Natural killer cell (primary cell): ENCODE measurements at regions of chr17 and their contacts with region 1.

Region 1: GRCh38 chr17:21284319-21285163 is at the start of gene MAP2K3:
- DNase-seq: peak; percentile 96 to 98
- ATAC-seq: peak; percentile 64 to 86 (median 74)
- H3K4me3 ChIP-seq: peak within 1 kb of the TSS; percentile 88
- H3K4me3 Mint-ChIP-seq: peak within 1 kb of the TSS; percentile 96
- H3K27ac ChIP-seq: peak within 1 kb of the TSS; percentile 97
- H3K27ac Mint-ChIP-seq: peak within 1 kb of the TSS; percentile 96 to 99
- H3K4me1 ChIP-seq: peaks cover 69% of the 10 kb centered on the region
- H3K4me1 Mint-ChIP-seq: peaks cover 49 to 74% of the 10 kb centered on the region in 2 donors
- H3K27me3 ChIP-seq: no peaks in the 10 kb centered on the region
- H3K27me3 Mint-ChIP-seq: no peaks in the 10 kb centered on the region
- CTCF ChIP-seq: no peak
- total RNA-seq, gene MAP2K3: 139 to 165 (median 162) TPM

Region 2: DNA sequence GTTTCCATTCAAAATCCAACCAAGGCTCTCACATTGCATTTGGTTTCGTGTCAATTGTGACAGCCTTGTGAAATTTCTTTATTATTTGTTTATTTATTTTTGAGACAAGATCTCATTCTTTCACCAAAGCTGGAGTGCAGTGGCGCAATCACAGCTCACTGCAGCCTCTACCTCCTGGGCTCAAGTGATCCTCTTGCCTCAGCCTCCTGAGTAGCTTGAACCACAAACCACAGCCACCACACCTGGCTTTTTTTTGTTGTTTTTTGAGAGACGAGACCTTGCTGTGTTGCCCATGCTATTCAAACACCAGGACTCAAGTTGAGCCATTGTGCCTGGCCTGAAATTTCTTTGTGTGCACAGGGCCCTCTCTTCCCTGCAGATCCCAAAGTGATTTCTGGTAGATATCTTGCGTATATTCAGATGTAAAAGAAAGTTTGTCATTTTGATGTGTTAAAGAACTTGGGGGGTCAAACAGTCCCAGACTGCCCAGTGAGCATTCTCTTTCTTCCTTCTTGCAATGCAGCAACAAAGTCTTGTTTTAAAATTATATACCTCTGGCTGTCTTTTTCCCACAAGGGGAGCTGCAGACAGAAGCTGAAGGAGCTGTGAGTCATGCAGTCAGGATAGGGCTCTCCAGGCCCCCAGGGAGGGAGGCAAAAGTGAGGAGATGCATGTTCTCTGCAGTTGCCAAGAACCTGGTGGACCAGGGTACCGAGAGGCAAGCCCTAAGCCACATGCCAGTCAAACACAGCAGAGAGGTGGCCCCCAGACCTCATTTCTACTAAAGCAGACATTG is 226.2 kb before region 1 on chr17:
- intact Hi-C with region 1: no loop called
- DNase-seq: no peak
- ATAC-seq: no peak
- H3K4me3 ChIP-seq: no peak overlapping the region
- H3K4me3 Mint-ChIP-seq: no peak overlapping the region
- H3K27ac ChIP-seq: no peak overlapping the region
- H3K27ac Mint-ChIP-seq: no peak overlapping the region
- H3K4me1 ChIP-seq: peaks cover 4% of the 10 kb centered on the region
- H3K4me1 Mint-ChIP-seq: no peaks in the 10 kb centered on the region
- H3K27me3 ChIP-seq: no peaks in the 10 kb centered on the region
- H3K27me3 Mint-ChIP-seq: peaks cover 0 to 3% of the 10 kb centered on the region in 2 donors
- CTCF ChIP-seq: no peak

Region 3: GRCh38 chr17:21089145-21089544 is 195.4 kb before region 1 on chr17:
- intact Hi-C with region 1: no loop called
- DNase-seq: no peak
- ATAC-seq: no peak
- H3K4me3 ChIP-seq: no peak overlapping the region
- H3K4me3 Mint-ChIP-seq: no peak overlapping the region
- H3K27ac ChIP-seq: no peak overlapping the region
- H3K27ac Mint-ChIP-seq: no peak overlapping the region
- H3K4me1 ChIP-seq: no peaks in the 10 kb centered on the region
- H3K4me1 Mint-ChIP-seq: no peaks in the 10 kb centered on the region
- H3K27me3 ChIP-seq: no peaks in the 10 kb centered on the region
- H3K27me3 Mint-ChIP-seq: peaks cover 0 to 3% of the 10 kb centered on the region in 2 donors
- CTCF ChIP-seq: no peak

Region 4: GRCh38 chr17:21126645-21127510 is 157.7 kb before region 1 on chr17 and contains the start of gene DHRS7B:
- intact Hi-C with region 1: loop called (anchors 2 kb)
- DNase-seq: peak; percentile 95 to 99
- ATAC-seq: peak; percentile 84 to 91 (median 88)
- H3K4me3 ChIP-seq: peak within 1 kb of the TSS; percentile 72
- H3K4me3 Mint-ChIP-seq: peak within 1 kb of the TSS; percentile 98
- H3K27ac ChIP-seq: peak within 1 kb of the TSS; percentile 91
- H3K27ac Mint-ChIP-seq: peak within 1 kb of the TSS; percentile 97 to 98
- H3K4me1 ChIP-seq: peaks cover 16% of the 10 kb centered on the region
- H3K4me1 Mint-ChIP-seq: peaks cover 34 to 39% of the 10 kb centered on the region in 2 donors
- H3K27me3 ChIP-seq: no peaks in the 10 kb centered on the region
- H3K27me3 Mint-ChIP-seq: no peaks in the 10 kb centered on the region
- CTCF ChIP-seq: no peak
- total RNA-seq, gene DHRS7B: 10.3 to 13.4 (median 11.5) TPM

Region 5: GRCh38 chr17:21228104-21228503 is 56.4 kb before region 1 on chr17:
- intact Hi-C with region 1: no loop called
- DNase-seq: no peak
- ATAC-seq: no peak
- H3K4me3 ChIP-seq: no peak overlapping the region
- H3K4me3 Mint-ChIP-seq: no peak overlapping the region
- H3K27ac ChIP-seq: no peak overlapping the region
- H3K27ac Mint-ChIP-seq: no peak overlapping the region
- H3K4me1 ChIP-seq: no peaks in the 10 kb centered on the region
- H3K4me1 Mint-ChIP-seq: no peaks in the 10 kb centered on the region
- H3K27me3 ChIP-seq: no peaks in the 10 kb centered on the region
- H3K27me3 Mint-ChIP-seq: no peaks in the 10 kb centered on the region
- CTCF ChIP-seq: no peak

Region 6: GRCh38 chr17:21252796-21253645 is 31.5 kb before region 1 on chr17 and contains the start of gene NATD1:
- intact Hi-C with region 1: loop called (anchors 1 kb)
- DNase-seq: peak; percentile 80 to 91
- ATAC-seq: peak; percentile 83 to 92 (median 88)
- H3K4me3 ChIP-seq: peak within 1 kb of the TSS; percentile 64
- H3K4me3 Mint-ChIP-seq: peak within 1 kb of the TSS; percentile 85
- H3K27ac ChIP-seq: peak within 1 kb of the TSS; percentile 66
- H3K27ac Mint-ChIP-seq: peak within 1 kb of the TSS; percentile 89 to 93
- H3K4me1 ChIP-seq: peaks cover 25% of the 10 kb centered on the region
- H3K4me1 Mint-ChIP-seq: peaks cover 33 to 49% of the 10 kb centered on the region in 2 donors
- H3K27me3 ChIP-seq: no peaks in the 10 kb centered on the region
- H3K27me3 Mint-ChIP-seq: no peaks in the 10 kb centered on the region
- CTCF ChIP-seq: no peak
- total RNA-seq, gene NATD1: 10.9 to 16.3 (median 14.1) TPM

Region 7: GRCh38 chr17:21296091-21297025 is 11.8 kb after region 1 on chr17:
- intact Hi-C with region 1: loop called (anchors 1 kb)
- DNase-seq: peak in 1 of 2 donors; percentile 60
- ATAC-seq: peak; percentile 71 to 89 (median 82)
- H3K4me3 ChIP-seq: no peak overlapping the region
- H3K4me3 Mint-ChIP-seq: peak overlapping the region; percentile 78
- H3K27ac ChIP-seq: peak overlapping the region; percentile 24
- H3K27ac Mint-ChIP-seq: peak overlapping the region; percentile 83 to 88
- H3K4me1 ChIP-seq: peaks cover 60% of the 10 kb centered on the region
- H3K4me1 Mint-ChIP-seq: peaks cover 33 to 44% of the 10 kb centered on the region in 2 donors
- H3K27me3 ChIP-seq: no peaks in the 10 kb centered on the region
- H3K27me3 Mint-ChIP-seq: no peaks in the 10 kb centered on the region
- CTCF ChIP-seq: no peak

Region 8: DNA sequence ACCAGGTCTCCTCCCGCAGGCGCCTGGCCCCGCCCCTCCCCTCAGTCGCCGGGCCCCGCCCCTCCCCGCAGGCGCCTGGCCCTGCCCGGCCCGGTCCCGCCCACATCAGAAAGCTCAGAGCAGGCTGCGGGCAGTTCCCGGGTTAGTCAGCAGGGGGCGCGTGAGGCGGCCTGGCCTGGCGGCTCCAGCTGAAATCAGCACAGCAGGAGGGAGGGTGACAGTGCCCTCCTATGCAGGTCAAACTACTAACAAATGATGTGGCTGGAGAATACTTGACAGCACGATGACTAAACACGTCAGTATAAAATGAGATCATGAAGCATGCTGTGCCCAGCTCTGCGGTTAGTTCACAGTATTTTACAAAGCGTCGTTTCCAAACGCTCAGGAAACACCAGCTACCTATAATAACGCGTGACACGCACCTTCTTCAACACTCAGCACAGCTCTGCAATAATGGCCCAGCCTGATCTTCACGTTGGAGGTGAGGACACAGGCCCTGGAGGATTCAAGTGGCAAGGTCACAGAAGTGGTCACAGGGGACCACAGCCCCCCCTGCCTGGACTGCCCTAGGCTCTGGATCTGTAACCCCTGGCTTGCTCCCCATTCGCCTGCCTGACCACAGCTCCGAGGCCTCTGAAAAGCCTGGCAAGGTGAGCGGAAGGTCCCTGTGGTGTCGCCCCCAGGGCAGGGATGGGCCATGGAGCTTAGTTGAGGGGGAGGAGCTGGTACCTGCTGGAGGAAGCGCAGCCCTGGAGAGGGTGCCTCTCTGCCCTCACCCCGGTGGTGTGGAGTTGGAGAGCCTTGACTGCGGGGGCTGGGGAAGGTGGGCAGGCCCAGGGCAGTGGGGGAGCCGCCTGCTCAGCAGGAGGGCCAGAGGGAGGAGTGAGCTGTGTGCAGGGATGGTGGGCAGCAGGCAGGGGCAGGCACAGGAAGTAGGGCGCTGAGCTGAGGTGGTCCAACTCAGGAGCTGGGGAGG is 172.8 kb after region 1 on chr17:
- intact Hi-C with region 1: loop called (anchors 5 kb)
- DNase-seq: peak; percentile 93 to 94
- ATAC-seq: peak; percentile 91 to 96 (median 93)
- H3K4me3 ChIP-seq: no peak overlapping the region
- H3K4me3 Mint-ChIP-seq: no peak overlapping the region
- H3K27ac ChIP-seq: no peak overlapping the region
- H3K27ac Mint-ChIP-seq: peak overlapping the region in 1 of 2 donors; percentile 84
- H3K4me1 ChIP-seq: peaks cover 17% of the 10 kb centered on the region
- H3K4me1 Mint-ChIP-seq: peaks cover 7 to 28% of the 10 kb centered on the region in 2 donors
- H3K27me3 ChIP-seq: no peaks in the 10 kb centered on the region
- H3K27me3 Mint-ChIP-seq: peaks cover 0 to 15% of the 10 kb centered on the region in 2 donors
- CTCF ChIP-seq: peak; percentile 96

Region 9: GRCh38 chr17:21505819-21506815 is 221.6 kb after region 1 on chr17:
- intact Hi-C with region 1: no loop called
- DNase-seq: no peak
- ATAC-seq: no peak
- H3K4me3 ChIP-seq: no peak overlapping the region
- H3K4me3 Mint-ChIP-seq: no peak overlapping the region
- H3K27ac ChIP-seq: no peak overlapping the region
- H3K27ac Mint-ChIP-seq: no peak overlapping the region
- H3K4me1 ChIP-seq: peaks cover under 1% of the 10 kb centered on the region
- H3K4me1 Mint-ChIP-seq: peaks cover 3 to 5% of the 10 kb centered on the region in 2 donors
- H3K27me3 ChIP-seq: peaks cover 8% of the 10 kb centered on the region
- H3K27me3 Mint-ChIP-seq: peaks cover 24 to 44% of the 10 kb centered on the region in 2 donors
- CTCF ChIP-seq: no peak